Activated CD8-positive, alpha-beta T cell treated with anti-CD3 and anti-CD28 coated beads for 36 hours (primary cell): ENCODE measurements at regions of chr4 and their contacts with region 1.

Region 1: DNA sequence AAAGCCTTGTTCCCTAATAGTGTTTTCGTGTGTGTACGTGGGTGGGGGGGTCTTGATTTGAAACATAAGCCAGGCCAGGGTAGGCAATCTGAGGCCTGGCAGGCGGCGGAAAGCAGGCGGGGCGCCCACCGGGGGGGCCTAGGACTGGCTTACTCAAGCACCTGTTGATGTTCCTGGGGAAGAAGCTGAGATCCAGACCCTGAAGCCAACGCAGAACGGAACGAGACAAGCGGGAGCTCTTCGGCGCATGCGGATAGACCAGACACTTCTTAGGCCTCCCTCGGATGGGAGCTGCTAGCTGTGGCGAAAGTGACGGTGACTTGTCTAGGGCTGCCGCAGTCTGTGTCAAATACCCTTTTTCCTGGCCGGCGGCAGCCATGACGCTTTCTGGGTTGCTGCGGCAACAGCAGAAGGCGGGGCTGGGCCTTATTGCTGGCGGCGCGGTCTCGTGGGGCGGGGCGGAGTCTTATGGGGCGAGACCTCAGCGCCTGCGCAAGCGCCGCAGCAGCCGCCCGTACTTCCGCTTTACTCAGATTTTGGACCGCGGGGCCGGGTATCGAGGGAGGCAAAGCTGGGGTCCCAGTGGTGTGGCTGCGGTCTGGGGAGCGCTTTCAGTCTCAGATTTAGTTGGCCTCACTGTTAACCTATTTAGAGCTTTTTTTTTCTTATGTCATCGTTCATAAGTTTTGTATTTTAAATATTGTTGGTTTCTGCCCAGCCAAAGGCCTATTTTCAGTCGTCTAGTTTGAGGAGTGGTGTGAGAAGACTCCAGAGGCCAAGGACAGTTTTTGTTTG is at the start of gene SPATA4:
- DNase-seq: peak; percentile 97
- ATAC-seq: peak; percentile 92
- H3K4me3 Mint-ChIP-seq: peak within 1 kb of the TSS; percentile 71
- H3K27ac Mint-ChIP-seq: peak within 1 kb of the TSS; percentile 75
- H3K4me1 Mint-ChIP-seq: peaks cover 29% of the 10 kb centered on the region
- H3K27me3 Mint-ChIP-seq: peaks cover 37% of the 10 kb centered on the region
- CTCF ChIP-seq: no peak
- total RNA-seq, gene SPATA4: not detected

Region 2: GRCh38 chr4:175833574-175834311 is 361.6 kb before region 1 on chr4:
- CTCF ChIA-PET with region 1: no interaction called
- POLR2A ChIA-PET with region 1: no interaction called
- intact Hi-C with region 1: no loop called
- DNase-seq: no peak
- ATAC-seq: no peak
- H3K4me3 Mint-ChIP-seq: no peak overlapping the region
- H3K27ac Mint-ChIP-seq: no peak overlapping the region
- H3K4me1 Mint-ChIP-seq: no peaks in the 10 kb centered on the region
- H3K27me3 Mint-ChIP-seq: no peaks in the 10 kb centered on the region
- CTCF ChIP-seq: no peak

Region 3: DNA sequence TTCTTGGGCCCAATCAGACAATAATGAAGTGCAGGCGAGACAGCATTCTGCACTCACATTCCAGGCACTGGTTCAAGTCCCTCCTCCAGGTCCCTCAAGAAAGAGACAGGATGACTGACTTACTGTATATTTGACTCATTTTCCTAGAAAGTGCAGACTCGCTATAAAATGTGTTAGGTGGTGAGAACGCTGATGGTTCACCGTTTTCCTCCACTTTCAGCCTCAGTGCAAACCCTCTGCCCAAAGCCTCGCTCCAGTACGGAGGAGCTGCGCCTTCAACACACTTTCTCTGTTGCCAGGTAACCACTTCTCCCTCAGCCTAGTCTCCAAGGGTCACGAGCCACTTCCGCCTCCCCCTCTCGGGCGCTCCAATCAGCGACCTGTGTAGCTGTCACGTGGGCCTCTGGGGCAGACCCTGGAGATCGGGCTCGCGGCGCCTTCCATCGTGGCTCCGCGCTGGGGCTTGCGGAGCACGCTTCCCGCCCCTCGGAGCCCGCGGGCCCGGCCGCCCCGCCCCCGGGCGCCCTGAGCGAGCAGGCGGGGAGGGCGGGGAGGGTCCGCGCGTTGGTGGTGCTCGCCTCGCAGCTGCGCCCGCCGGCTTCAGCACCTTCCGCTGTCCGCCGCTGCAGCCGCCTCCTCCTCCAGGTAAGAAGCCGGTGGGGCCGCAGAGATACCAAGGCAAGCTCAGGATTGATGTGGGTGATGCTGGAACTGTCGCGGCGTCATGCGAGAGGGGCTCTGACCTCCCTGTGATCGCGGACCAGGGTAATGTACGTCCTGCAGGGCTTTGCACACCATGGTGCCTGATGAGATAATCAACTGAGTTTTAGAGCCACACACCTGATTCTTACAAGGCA is 129.7 kb before region 1 on chr4 and contains the start of gene WDR17:
- CTCF ChIA-PET with region 1: no interaction called
- POLR2A ChIA-PET with region 1: no interaction called
- intact Hi-C with region 1: loop called (anchors 2 kb)
- DNase-seq: peak; percentile 85
- ATAC-seq: peak; percentile 98
- H3K4me3 Mint-ChIP-seq: peak within 1 kb of the TSS; percentile 71
- H3K27ac Mint-ChIP-seq: peak within 1 kb of the TSS; percentile 44
- H3K4me1 Mint-ChIP-seq: peaks cover 10% of the 10 kb centered on the region
- H3K27me3 Mint-ChIP-seq: peaks cover 22% of the 10 kb centered on the region
- CTCF ChIP-seq: no peak
- total RNA-seq, gene WDR17: 0.63 to 1.5 TPM

Region 4: GRCh38 chr4:176185067-176185466 is 10.3 kb before region 1 on chr4:
- CTCF ChIA-PET with region 1: no interaction called
- POLR2A ChIA-PET with region 1: no interaction called
- intact Hi-C with region 1: no loop called
- DNase-seq: no peak
- ATAC-seq: no peak
- H3K4me3 Mint-ChIP-seq: no peak overlapping the region
- H3K27ac Mint-ChIP-seq: no peak overlapping the region
- H3K4me1 Mint-ChIP-seq: no peaks in the 10 kb centered on the region
- H3K27me3 Mint-ChIP-seq: peaks cover 29% of the 10 kb centered on the region
- CTCF ChIP-seq: no peak

Region 5: GRCh38 chr4:176238157-176238610 is 42.8 kb after region 1 on chr4:
- CTCF ChIA-PET with region 1: no interaction called
- POLR2A ChIA-PET with region 1: no interaction called
- intact Hi-C with region 1: no loop called
- DNase-seq: no peak
- ATAC-seq: no peak
- H3K4me3 Mint-ChIP-seq: no peak overlapping the region
- H3K27ac Mint-ChIP-seq: no peak overlapping the region
- H3K4me1 Mint-ChIP-seq: no peaks in the 10 kb centered on the region
- H3K27me3 Mint-ChIP-seq: peaks cover 15% of the 10 kb centered on the region
- CTCF ChIP-seq: no peak

Region 6: DNA sequence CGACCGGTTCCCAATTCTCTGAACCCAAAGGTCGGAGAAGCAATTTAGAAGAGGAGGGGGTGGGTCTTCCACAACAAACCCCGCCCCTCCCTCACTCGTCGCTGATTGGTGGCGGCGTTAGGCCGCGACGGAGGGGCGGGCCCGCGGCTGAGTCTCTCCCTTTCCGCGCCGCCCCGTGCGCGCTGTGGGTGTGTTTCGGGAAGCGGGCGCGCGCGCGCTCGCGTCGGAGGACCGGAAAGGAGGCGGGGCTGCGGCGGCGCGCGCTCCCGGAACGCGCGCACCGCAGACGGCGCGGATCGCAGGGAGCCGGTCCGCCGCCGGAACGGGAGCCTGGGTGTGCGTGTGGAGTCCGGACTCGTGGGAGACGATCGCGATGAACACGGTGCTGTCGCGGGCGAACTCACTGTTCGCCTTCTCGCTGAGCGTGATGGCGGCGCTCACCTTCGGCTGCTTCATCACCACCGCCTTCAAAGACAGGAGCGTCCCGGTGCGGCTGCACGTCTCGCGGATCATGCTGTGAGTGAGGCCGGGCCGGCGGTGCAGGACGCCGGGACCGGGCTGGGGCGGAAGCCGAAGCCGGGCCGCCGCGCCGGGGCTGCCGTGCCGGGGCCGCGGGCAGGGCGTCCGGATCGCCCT is 124.4 kb after region 1 on chr4 and contains the start of gene SPCS3:
- CTCF ChIA-PET with region 1: no interaction called
- POLR2A ChIA-PET with region 1: no interaction called
- intact Hi-C with region 1: loop called (anchors 5 kb)
- DNase-seq: peak; percentile 95
- ATAC-seq: peak; percentile 94
- H3K4me3 Mint-ChIP-seq: peak within 1 kb of the TSS; percentile 93
- H3K27ac Mint-ChIP-seq: peak within 1 kb of the TSS; percentile 93
- H3K4me1 Mint-ChIP-seq: peaks cover 34% of the 10 kb centered on the region
- H3K27me3 Mint-ChIP-seq: no peaks in the 10 kb centered on the region
- CTCF ChIP-seq: no peak
- total RNA-seq, gene SPCS3: 153 to 155 TPM